ENCODE measurements at regions of chr11 and their contacts with region 1.

Region 1: GRCh38 chr11:114262681-114263512 is 33.3 kb upstream of the NNMT start:
- DNase-seq: peak; percentile 73
- H3K4me3 Mint-ChIP-seq: no peak overlapping the region
- H3K27ac Mint-ChIP-seq: no peak overlapping the region
- H3K4me1 Mint-ChIP-seq: no peaks in the 10 kb centered on the region
- H3K27me3 Mint-ChIP-seq: peaks cover 2% of the 10 kb centered on the region

Region 2: DNA sequence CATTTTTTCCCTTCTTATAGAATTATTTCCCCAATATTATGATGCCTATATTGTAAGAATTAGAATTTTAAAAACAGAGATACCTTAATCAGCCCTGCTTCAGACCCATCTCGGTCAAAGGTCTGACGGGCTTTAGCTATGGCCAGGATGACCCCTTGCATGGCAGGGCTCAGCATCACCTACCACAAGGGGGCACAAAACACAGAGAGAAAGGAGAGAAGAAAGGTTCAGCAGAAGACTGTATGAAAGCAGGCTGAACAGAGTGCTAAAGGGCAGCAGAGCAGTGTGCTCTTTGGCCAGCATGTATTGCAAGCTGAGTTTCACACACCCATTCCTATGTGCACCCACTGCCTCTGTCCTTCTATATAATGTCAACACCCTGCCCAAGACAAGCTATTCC is 456.5 kb before region 1 on chr11:
- intact Hi-C with region 1: loop called (anchors 5 kb)
- DNase-seq: peak; percentile 76
- H3K4me3 Mint-ChIP-seq: no peak overlapping the region
- H3K27ac Mint-ChIP-seq: no peak overlapping the region
- H3K4me1 Mint-ChIP-seq: peaks cover 2% of the 10 kb centered on the region
- H3K27me3 Mint-ChIP-seq: no peaks in the 10 kb centered on the region

Region 3: GRCh38 chr11:113896156-113896879 is 366.6 kb before region 1 on chr11:
- intact Hi-C with region 1: loop called (anchors 1 kb)
- DNase-seq: peak; percentile 76
- H3K4me3 Mint-ChIP-seq: no peak overlapping the region
- H3K27ac Mint-ChIP-seq: no peak overlapping the region
- H3K4me1 Mint-ChIP-seq: peaks cover 1% of the 10 kb centered on the region
- H3K27me3 Mint-ChIP-seq: peaks cover 3% of the 10 kb centered on the region

Region 4: GRCh38 chr11:113994077-113994954 is 268.6 kb before region 1 on chr11:
- intact Hi-C with region 1: loop called (anchors 1 kb)
- DNase-seq: peak; percentile 80
- H3K4me3 Mint-ChIP-seq: no peak overlapping the region
- H3K27ac Mint-ChIP-seq: no peak overlapping the region
- H3K4me1 Mint-ChIP-seq: peaks cover 2% of the 10 kb centered on the region
- H3K27me3 Mint-ChIP-seq: peaks cover 8% of the 10 kb centered on the region

Region 5: GRCh38 chr11:114036156-114036811 is 226.6 kb before region 1 on chr11:
- intact Hi-C with region 1: loop called (anchors 1 kb)
- DNase-seq: peak; percentile 83
- H3K4me3 Mint-ChIP-seq: no peak overlapping the region
- H3K27ac Mint-ChIP-seq: no peak overlapping the region
- H3K4me1 Mint-ChIP-seq: peaks cover 2% of the 10 kb centered on the region
- H3K27me3 Mint-ChIP-seq: peaks cover 29% of the 10 kb centered on the region

Region 6: GRCh38 chr11:114279778-114280546 is 17.1 kb after region 1 on chr11:
- intact Hi-C with region 1: no loop called
- DNase-seq: no peak
- H3K4me3 Mint-ChIP-seq: no peak overlapping the region
- H3K27ac Mint-ChIP-seq: no peak overlapping the region
- H3K4me1 Mint-ChIP-seq: no peaks in the 10 kb centered on the region
- H3K27me3 Mint-ChIP-seq: peaks cover 18% of the 10 kb centered on the region